Activated CD8-positive, alpha-beta T cell treated with anti-CD3 and anti-CD28 coated beads, Interleukin-2, amount 10 ng/mL, durations not matched to agents 7 days and 5 days (primary cell): ENCODE measurements at regions of chr12 and their contacts with region 1.

Region 1: DNA sequence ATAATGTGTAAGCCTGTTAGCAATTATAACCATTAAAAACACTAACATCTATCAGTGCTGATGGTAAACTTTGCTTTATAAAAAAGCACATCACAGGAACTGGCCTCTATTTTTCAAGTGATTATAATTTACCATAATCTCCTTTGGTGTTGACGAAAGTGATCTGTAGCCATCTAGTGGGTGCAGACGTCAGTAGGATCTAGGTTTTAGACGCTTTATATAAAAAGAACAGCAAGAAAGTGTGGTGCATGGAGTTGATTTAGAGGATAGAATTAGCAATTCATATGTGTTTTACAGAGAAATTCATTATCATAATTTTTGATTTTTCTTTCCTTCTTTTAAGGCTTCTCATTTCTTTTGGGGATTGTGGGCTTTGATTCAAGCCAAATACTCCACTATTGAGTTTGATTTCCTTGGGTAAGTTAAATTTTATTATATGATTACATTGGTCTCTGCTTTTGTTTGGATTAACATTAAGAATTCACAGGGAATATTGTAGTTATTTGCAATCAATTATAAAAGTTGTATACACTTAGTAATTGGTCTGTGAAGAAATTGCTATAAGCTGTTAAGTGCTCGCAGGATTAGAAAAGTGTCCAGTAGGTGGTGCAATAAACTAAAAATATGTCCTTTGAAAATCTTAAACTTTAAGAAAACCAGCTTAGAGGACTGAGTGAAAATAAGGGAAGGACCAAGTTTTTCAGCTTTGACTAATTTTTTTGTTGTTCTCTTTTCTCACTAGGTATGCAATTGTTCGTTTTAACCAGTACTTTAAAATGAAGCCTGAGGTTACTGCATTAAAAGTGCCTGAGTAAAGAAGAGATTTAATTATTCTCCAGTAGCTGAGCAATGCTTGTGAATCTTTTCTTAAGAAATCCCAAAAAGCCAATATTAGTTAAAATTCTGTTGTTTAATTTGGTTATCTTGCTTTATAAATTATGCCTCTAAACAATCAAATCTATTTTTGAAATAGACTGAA is 59.5 kb downstream of the ETNK1 start:
- DNase-seq: no peak
- ATAC-seq: no peak
- H3K4me3 Mint-ChIP-seq: no peak overlapping the region
- H3K27ac Mint-ChIP-seq: no peak overlapping the region
- H3K4me1 Mint-ChIP-seq: peaks cover 18% of the 10 kb centered on the region
- H3K27me3 Mint-ChIP-seq: no peaks in the 10 kb centered on the region

Region 2: GRCh38 chr12:22665476-22665875 is 19.0 kb before region 1 on chr12:
- CTCF ChIA-PET with region 1: interaction called, 10 read pairs
- POLR2A ChIA-PET with region 1: no interaction called
- DNase-seq: no peak
- ATAC-seq: no peak
- H3K4me3 Mint-ChIP-seq: no peak overlapping the region
- H3K27ac Mint-ChIP-seq: no peak overlapping the region
- H3K4me1 Mint-ChIP-seq: peaks cover 2% of the 10 kb centered on the region
- H3K27me3 Mint-ChIP-seq: no peaks in the 10 kb centered on the region

Region 3: DNA sequence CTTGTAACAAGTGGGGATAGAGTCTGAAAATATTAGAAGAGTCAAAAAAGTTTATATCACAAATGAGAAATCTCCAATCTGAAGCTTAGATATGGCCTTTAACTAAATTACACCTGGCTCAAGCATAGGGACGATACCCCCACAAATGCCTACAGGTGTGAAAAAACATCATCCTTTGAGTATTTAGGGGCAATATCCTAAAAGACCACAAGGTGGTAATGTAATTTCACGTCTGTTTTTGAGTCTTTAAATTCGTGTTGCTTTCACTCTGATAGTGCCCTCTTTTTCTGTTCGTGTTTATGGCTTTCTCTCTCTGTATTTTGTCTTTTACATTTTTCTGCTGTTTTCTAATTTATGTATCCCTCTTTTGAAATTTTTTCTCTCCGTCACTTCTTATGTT is 24.9 kb after region 1 on chr12:
- CTCF ChIA-PET with region 1: interaction called, 13 read pairs
- POLR2A ChIA-PET with region 1: no interaction called
- DNase-seq: no peak
- ATAC-seq: no peak
- H3K4me3 Mint-ChIP-seq: no peak overlapping the region
- H3K27ac Mint-ChIP-seq: no peak overlapping the region
- H3K4me1 Mint-ChIP-seq: peaks cover 5% of the 10 kb centered on the region
- H3K27me3 Mint-ChIP-seq: peaks cover 21% of the 10 kb centered on the region

Region 4: DNA sequence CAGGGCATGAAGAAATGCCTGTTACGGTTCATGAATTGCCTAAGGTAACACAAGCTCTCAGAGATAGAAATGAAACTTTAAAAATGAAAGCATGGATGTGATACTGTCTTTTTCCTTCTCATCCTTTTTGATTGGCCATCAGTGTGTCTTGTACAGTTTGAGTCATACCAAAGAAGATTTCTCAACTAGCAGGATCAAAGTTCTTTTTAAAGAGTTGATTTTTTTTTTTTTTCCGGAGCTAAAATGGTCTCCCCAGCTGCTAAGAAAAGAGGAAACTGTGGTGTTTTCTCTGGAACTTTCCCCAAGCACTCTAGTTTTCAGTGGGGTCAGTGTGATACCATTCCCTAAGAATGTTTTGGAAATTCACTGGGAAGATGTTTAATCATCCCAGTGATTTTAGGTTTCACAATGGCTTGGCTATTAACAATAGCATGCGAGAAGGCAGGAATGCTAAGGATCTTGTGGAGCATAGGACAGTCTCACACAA is 45.6 kb after region 1 on chr12:
- CTCF ChIA-PET with region 1: no interaction called
- POLR2A ChIA-PET with region 1: no interaction called
- DNase-seq: no peak
- ATAC-seq: no peak
- H3K4me3 Mint-ChIP-seq: no peak overlapping the region
- H3K27ac Mint-ChIP-seq: no peak overlapping the region
- H3K4me1 Mint-ChIP-seq: peaks cover 2% of the 10 kb centered on the region
- H3K27me3 Mint-ChIP-seq: peaks cover 11% of the 10 kb centered on the region